ENCODE measurements at regions of chr11 and their contacts with region 1.

Region 1: DNA sequence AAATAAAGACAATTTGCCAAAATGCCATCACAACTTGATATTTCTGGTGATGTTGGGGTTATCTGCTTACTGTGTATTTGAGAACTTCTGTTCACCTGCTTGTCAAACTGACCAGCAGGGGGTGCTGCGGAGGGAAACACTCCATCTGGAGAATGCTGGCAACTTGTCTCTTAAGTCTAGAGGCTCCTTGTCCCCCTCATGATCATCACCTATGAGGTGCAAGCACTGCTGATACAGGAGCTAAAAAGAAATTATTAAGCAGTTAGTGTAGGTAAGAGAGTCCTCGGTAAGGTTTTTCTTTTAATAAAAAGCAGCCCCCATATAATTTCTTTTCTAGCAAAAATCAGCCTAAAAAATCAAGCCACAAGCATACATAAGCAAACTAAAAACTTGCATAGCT is 32.7 kb upstream of the GLYATL1B start:
- DNase-seq: no peak
- H3K4me3 ChIP-seq: no peak overlapping the region
- CTCF ChIP-seq: peak; percentile 69

Region 2: DNA sequence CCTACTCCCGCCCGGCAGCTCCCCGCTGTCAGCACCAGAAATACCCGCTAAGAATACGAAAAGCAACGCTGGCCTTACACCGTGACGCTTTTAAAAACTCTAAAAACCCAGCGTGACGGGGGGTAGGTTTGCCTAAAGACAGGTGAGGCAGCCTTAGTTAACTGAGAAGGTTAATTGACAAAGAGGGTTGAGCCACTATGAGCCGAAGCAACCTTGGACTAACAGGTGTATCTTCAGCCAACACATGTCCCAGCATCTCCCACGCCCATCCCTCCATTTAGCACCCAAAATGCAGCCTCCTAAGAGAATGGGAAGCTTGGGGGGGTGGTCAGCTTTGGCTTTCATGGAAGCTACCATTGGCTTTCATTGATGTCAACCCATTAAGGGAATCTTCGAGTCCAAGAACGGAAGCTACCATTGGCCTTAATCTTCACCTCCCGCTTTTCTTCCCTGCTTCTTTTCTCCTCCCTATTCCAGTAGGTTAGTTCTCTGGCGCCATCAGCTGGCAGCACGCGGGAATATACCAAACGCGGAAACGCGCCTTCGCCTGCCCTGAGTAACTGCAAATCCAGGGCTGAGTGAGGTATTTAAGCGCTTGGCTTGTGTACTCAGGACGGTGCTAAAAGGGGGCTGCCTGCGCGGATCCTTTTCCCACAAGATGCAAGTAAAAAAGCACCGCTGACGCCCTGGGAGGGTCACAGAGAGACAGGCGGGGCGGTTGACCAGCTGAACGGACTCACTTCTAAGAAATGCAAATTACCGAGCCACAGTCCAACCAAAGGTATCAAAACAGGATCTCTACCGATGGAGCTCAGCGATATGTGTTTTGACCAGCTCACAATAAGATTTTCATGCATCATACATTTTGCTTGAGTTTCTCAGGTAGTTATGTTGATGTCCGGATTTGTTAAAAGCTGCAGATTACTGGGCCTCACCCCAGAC is 152.6 kb before region 1 on chr11:
- CTCF ChIA-PET with region 1: interaction called, 17 read pairs
- POLR2A ChIA-PET with region 1: no interaction called
- DNase-seq: no peak
- H3K4me3 ChIP-seq: no peak overlapping the region
- CTCF ChIP-seq: peak; percentile 66

Region 3: DNA sequence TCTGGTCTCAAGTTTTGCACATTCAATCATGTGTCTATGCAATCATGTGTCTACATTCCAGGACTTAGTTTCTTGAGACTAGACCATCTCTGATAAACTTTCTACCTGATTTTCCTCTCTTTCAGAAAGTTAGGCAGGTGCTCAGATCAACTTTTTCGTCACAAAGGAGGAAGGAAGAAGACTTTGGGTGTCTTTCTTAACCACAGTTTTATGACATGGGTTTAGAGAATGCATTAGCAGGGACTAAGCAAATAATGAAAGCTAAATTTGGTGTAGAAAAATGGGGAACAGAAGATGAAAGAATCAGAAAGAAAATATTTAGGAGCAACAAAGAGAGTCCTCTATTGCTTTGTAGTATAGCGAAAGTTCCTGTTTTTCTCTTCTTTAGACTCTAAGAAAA is 25.0 kb after region 1 on chr11:
- CTCF ChIA-PET with region 1: interaction called, 14 read pairs
- POLR2A ChIA-PET with region 1: no interaction called
- DNase-seq: no peak
- H3K4me3 ChIP-seq: no peak overlapping the region
- CTCF ChIP-seq: no peak